Mammary epithelial cell (primary cell): ENCODE measurements at regions of chr15 and their contacts with region 1.

Region 1: DNA sequence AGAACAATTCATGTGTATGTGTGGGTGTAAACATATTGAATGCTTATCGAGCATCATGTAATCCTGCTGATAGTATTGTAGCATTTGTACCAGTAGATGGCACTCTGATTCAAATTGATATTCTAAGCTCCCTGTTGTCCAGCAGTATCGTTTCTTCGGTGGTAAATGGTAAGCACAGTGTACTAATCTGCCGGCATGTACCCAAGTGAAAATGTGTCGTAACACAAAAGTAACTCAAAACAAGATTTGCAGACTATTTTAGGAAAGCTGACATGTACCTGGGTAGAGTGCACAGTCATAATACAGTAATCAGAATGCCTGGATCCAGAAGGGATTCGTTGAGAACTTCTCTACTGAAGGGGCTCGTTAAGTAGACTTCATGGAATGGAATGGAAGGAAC is 31.7 kb upstream of the MNS1 start:
- DNase-seq: peak; percentile 48
- H3K4me3 ChIP-seq: no peak overlapping the region
- H3K27ac ChIP-seq: no peak overlapping the region
- H3K4me1 ChIP-seq: no peaks in the 10 kb centered on the region
- H3K27me3 ChIP-seq: no peaks in the 10 kb centered on the region
- CTCF ChIP-seq: peak; percentile 71 to 83

Region 2: GRCh38 chr15:56732921-56733797 is 236.5 kb after region 1 on chr15 and contains the start of gene ZNF280D:
- CTCF ChIA-PET with region 1: no interaction called
- dilution Hi-C with region 1: no loop called
- in situ Hi-C with region 1: no loop called
- intact Hi-C with region 1: loop called (anchors 5 kb)
- DNase-seq: peak; percentile 83
- H3K4me3 ChIP-seq: peak within 1 kb of the TSS; percentile 73 to 80 (median 75)
- H3K27ac ChIP-seq: peak within 1 kb of the TSS; percentile 67
- H3K4me1 ChIP-seq: peaks cover 21% of the 10 kb centered on the region
- H3K27me3 ChIP-seq: no peaks in the 10 kb centered on the region
- CTCF ChIP-seq: no peak
- total RNA-seq, gene ZNF280D: 24.1 to 25.7 TPM

Region 3: DNA sequence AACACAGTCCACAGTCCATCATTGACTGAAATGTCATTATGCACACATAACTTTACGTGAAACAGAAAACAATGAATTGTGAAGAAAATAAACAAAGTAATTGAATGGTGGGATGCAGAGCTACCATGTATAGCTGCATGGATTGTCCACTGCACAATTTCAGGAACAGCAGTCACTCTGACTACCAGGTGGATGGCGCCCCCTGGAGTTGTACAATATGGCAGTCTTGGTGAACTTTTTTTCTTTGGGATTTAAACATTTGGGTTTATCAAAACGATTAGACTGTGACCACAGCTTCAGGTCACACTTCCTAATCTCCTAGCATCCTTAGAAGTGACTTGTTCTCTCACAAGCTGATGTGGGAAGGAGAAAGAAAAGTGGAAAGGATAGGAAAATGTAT is 372.9 kb after region 1 on chr15:
- CTCF ChIA-PET with region 1: interaction called, 4 read pairs
- dilution Hi-C with region 1: no loop called
- in situ Hi-C with region 1: loop called in 1 of 2 experiments (anchors 10 kb)
- intact Hi-C with region 1: loop called (anchors 1 kb)
- DNase-seq: no peak
- H3K4me3 ChIP-seq: no peak overlapping the region
- H3K27ac ChIP-seq: no peak overlapping the region
- H3K4me1 ChIP-seq: peaks cover 9% of the 10 kb centered on the region
- H3K27me3 ChIP-seq: no peaks in the 10 kb centered on the region
- CTCF ChIP-seq: peak; percentile 41 to 48

Region 4: GRCh38 chr15:57146506-57147201 is 650.0 kb after region 1 on chr15:
- CTCF ChIA-PET with region 1: no interaction called
- dilution Hi-C with region 1: no loop called
- in situ Hi-C with region 1: no loop called
- intact Hi-C with region 1: loop called (anchors 5 kb)
- DNase-seq: peak; percentile 29
- H3K4me3 ChIP-seq: no peak overlapping the region
- H3K27ac ChIP-seq: peak overlapping the region; percentile 52
- H3K4me1 ChIP-seq: peaks cover 31% of the 10 kb centered on the region
- H3K27me3 ChIP-seq: no peaks in the 10 kb centered on the region
- CTCF ChIP-seq: peak; percentile 48 to 66

Region 5: GRCh38 chr15:57541805-57542504 is 1045.3 kb after region 1 on chr15:
- CTCF ChIA-PET with region 1: no interaction called
- dilution Hi-C with region 1: no loop called
- in situ Hi-C with region 1: loop called in 1 of 2 experiments (anchors 25 kb)
- intact Hi-C with region 1: loop called (anchors 5 kb)
- DNase-seq: peak; percentile 53
- H3K4me3 ChIP-seq: no peak overlapping the region
- H3K27ac ChIP-seq: no peak overlapping the region
- H3K4me1 ChIP-seq: peaks cover 5% of the 10 kb centered on the region
- H3K27me3 ChIP-seq: no peaks in the 10 kb centered on the region
- CTCF ChIP-seq: peak; percentile 93 to 97